Activated T-helper 2 cell treated with anti-CD3 and anti-CD28 coated beads, Interferon-gamma antibody, Interleukin-2, Interleukin-4, amounts not matched to agents 10 μg/mL and 5 μg/mL and 100 μg/mL, durations not matched to agents 14 hours and 24 hours and 36 hours (primary cell): ENCODE measurements at regions of chr15 and their contacts with region 1.

Region 1: GRCh38 chr15:80776420-80777045 is 2.6 kb upstream of the CEMIP start:
- DNase-seq: peak; percentile 45
- H3K4me3 Mint-ChIP-seq: no peak overlapping the region
- H3K27ac Mint-ChIP-seq: no peak overlapping the region
- H3K4me1 Mint-ChIP-seq: peaks cover 12% of the 10 kb centered on the region
- H3K27me3 Mint-ChIP-seq: peaks cover 42% of the 10 kb centered on the region

Region 2: DNA sequence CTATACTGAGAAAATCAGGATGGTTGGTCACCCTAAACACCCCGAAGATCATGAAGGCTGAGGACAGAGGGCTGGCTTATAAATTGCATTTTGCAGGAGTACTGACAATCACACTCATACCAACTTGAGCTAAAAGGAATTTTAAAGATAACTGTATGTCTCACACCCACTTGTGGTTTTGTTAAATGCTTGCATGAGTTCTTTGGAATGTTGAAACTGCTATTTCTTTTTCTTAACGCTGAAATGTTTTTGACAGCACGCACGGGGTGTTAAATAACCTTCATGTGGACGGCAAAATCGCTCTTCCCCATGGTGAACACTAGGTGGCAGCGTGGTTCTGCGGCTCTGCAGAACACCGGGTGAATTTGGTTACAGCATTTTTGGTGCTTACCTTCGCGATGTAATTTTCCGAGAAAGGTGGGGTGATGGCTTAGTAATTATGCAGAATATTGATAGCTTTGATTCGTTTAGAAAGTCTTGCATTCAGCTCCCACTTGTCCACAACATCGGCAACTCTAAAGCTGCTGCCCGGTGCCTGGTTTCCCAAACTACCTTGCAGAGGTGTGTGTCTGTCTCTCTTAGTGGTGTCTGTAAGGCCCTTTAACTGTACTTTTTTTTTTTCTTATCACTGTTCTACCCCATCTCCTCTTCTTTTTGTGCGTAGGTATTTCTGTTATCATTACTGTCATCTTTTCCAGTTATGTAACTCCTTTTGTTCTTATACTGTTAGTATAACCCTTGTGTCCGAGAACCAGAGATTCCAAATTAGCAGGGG is 320.7 kb before region 1 on chr15:
- intact Hi-C with region 1: loop called (anchors 2 kb)
- DNase-seq: peak; percentile 41
- H3K4me3 Mint-ChIP-seq: no peak overlapping the region
- H3K27ac Mint-ChIP-seq: no peak overlapping the region
- H3K4me1 Mint-ChIP-seq: peaks cover 6% of the 10 kb centered on the region
- H3K27me3 Mint-ChIP-seq: peaks cover 15% of the 10 kb centered on the region

Region 3: GRCh38 chr15:80567721-80568157 is 208.8 kb before region 1 on chr15:
- intact Hi-C with region 1: loop called (anchors 1 kb)
- DNase-seq: no peak
- H3K4me3 Mint-ChIP-seq: no peak overlapping the region
- H3K27ac Mint-ChIP-seq: no peak overlapping the region
- H3K4me1 Mint-ChIP-seq: no peaks in the 10 kb centered on the region
- H3K27me3 Mint-ChIP-seq: peaks cover 10% of the 10 kb centered on the region

Region 4: DNA sequence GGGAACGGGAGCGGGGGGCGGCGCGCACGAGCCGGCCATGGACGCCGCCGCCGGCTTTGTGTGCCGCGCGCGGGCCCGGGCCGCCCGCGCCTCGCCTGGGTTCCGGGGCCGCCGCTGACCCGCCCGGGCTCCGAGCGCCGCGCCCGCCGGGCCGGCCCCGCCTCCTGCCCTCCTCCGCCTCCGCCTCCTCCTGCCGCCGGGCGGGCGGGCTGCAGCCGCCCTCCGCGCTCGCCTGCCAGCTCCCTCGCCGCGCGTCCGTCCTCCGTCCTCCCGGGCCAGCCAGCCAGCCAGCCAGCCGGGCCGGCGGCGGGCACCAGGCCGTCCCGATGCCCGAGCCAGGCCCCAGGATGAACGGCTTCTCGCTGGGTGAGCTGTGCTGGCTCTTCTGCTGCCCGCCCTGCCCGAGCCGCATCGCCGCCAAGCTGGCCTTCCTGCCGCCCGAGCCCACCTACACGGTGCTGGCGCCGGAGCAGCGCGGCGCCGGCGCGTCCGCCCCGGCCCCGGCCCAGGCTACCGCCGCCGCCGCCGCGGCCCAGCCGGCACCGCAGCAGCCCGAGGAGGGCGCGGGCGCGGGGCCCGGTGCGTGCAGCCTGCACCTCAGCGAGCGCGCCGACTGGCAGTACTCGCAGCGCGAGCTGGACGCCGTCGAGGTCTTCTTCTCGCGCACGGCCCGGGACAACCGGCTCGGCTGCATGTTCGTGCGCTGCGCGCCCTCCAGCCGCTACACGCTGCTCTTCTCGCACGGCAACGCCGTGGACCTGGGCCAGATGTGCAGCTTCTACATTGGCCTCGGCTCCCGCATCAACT is 81.2 kb before region 1 on chr15 and contains the start of gene ABHD17C:
- intact Hi-C with region 1: loop called (anchors 5 kb)
- DNase-seq: peak; percentile 32
- H3K4me3 Mint-ChIP-seq: peak within 1 kb of the TSS; percentile 86
- H3K27ac Mint-ChIP-seq: peak within 1 kb of the TSS; percentile 43
- H3K4me1 Mint-ChIP-seq: peaks cover 16% of the 10 kb centered on the region
- H3K27me3 Mint-ChIP-seq: peaks cover 51% of the 10 kb centered on the region
- total RNA-seq, gene ABHD17C: 4.2 and 4.3 TPM in 2 replicates

Region 5: DNA sequence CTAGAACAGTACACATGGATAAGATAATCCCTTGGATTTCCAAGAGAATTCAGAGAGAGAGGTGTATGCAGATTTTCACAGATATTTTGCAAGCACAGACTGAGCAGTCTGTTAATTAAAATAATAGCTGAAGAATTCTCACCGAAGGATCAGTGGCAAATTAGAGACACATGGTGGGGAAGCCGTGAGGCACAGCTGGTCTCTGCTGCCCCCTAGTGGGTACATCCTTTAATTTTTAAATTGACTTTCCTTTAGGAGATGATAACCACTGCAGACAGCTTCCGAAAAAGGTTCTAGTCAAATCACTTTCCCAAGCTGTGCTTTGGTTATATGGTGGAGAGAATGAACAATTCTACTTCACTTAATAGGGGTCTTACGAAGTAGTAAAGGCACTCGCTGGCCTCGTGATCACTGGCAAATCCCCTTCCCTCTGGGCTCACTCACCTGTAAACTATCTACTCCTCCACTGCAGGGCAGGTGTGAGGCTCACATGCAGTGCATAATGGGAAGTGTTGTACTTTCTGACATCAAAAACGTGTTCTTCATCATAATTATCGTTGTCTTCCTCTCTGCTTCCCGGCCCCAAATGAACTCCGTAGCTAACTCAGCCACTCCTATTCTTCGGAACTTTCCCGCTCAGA is 193.6 kb after region 1 on chr15:
- intact Hi-C with region 1: loop called (anchors 2 kb)
- DNase-seq: peak; percentile 30
- H3K4me3 Mint-ChIP-seq: no peak overlapping the region
- H3K27ac Mint-ChIP-seq: no peak overlapping the region
- H3K4me1 Mint-ChIP-seq: peaks cover 2% of the 10 kb centered on the region
- H3K27me3 Mint-ChIP-seq: no peaks in the 10 kb centered on the region